Mucosa of descending colon (tissue), 3 donors: ENCODE measurements at regions of chr16 and their contacts with region 1.

Region 1: DNA sequence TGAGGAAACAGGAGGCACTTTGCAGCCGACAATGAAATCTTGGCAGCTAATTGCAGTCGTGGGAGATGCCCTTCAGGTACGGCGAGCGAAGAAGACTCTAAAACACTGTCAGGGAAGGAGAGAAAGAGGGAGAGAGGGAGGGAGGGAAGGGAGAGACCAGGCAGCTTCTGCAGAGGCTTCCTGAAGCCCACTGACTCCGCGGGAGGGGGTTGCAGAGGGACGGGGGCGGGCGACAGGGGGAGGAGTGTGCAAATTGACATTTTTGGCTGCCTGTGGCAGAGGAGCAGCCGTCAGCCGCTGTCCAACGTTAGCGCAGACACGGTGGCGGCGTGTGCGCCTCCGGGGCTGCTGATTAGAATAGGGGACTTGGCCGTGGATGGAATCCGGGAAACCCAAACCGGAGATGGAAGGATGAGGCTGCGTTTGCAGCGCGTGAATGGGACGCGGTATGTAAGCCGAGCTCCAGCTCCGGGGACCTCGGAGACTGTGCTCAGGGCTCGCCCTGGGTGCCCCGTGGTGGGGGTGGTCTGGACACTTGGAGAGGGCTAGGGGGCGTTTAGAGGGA is 849.1 kb upstream of the RBFOX1 start:
- DNase-seq: no peak
- ATAC-seq: peak; percentile 15
- H3K4me3 ChIP-seq: no peak overlapping the region
- H3K4me1 ChIP-seq: no peaks in the 10 kb centered on the region
- CTCF ChIP-seq: no peak

Region 2: DNA sequence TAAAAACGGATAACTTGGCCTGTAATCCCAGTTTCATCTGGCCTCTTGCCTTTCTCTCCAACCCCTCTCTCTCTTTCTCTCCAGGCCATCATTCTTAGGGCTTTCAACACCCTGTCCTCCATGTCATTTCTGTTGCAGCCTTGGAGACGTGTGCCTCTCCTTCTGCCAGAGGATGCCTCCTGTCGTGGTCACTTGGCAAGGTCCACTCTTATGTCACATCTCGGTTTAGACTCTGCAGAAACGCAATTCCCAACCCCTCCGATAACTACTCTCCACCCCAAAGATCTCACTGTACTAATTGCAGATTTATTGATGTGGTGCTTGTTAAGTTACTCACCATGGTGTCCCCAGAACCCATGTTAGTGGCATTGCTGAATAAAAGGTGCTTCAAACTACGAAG is 61.8 kb after region 1 on chr16:
- intact Hi-C with region 1: loop called in 1 of 2 experiments (anchors 10 kb)
- DNase-seq: no peak
- ATAC-seq: no peak
- H3K4me3 ChIP-seq: no peak overlapping the region
- H3K4me1 ChIP-seq: no peaks in the 10 kb centered on the region
- CTCF ChIP-seq: no peak

Region 3: DNA sequence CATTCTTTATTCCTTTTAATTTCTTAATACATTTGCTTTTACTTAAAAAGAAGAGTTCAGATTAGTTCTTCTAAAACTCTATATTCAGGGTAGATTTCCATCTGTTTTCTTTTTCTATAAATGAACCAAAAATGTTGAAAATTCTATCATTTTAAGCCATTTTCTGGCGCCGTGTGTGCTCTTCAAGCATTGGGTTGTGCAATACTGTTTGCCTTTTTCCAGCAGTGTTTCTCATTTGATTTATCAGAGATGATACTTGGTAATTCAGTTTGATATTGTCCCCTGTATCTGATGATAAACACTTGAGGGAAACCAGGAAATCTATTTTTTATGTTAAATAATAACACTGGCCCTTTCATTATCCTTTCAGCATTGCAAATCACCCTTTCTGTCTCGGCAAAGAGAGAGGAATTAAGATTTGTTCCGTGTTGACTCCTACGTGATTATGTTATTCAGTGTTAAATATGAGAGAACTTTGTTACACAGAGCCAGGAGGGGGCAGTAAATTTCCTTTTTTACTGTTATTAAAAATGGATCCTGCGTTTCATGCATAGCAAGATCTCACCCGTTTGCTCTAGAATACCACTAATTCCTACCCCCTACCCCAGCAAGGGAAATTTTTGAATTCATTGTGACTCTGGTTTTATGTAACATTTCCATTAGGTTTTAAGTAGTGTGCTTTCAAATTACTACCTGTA is 242.2 kb after region 1 on chr16:
- intact Hi-C with region 1: no loop called
- DNase-seq: no peak
- ATAC-seq: no peak
- H3K4me3 ChIP-seq: no peak overlapping the region
- H3K4me1 ChIP-seq: no peaks in the 10 kb centered on the region
- CTCF ChIP-seq: no peak